Activated CD4-positive, alpha-beta T cell treated with anti-CD3 and anti-CD28 coated beads for 36 hours (primary cell): ENCODE measurements at regions of chr2 and their contacts with region 1.

Region 1: DNA sequence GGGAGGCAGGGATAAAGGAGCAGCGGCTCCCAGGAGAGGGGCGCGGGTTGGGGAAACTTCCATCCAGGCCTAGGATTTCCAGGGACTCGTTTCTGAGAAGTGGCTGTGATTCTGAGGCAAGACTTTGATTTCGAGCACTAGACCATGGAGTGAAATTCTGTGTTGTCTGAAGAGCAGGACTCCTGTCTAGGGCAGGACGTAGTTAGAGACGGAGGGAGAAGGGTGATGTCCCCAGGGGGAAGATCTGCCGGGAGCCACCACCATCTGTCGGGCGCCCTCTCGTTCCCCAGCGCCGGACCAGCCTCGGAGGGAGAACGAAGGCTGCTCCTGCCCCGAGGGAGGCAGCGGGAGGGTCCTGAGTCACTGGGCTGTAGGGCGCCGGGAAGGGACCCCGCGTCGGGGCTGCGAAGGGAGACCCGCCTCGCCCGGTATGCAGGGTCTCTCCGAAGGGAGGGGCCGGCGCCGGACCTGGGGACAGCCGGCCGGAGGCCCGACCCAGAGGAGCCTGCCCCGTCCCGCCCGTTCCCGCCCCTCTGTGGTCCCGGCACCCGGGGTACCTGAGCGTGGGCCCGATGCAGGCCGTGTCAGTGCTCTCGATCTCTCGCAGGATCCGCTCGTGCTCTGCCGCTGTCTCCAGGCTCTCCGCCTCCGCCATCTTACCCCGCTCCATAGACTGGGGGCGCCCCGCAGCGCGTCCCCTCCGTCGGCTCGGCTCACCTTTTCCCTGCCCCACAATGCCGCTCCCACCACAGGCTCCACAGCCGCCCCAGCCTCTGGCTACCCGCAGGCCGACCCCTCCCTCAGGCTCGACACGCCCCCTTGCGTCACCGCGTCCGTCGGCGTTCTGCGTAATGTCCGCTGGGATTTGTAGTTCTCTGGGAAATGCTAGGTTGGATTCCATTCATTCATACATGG is at the start of gene EXOC6B:
- DNase-seq: peak; percentile 91
- ATAC-seq: peak; percentile 80
- H3K4me3 Mint-ChIP-seq: peak within 1 kb of the TSS; percentile 93
- H3K27ac Mint-ChIP-seq: peak within 1 kb of the TSS; percentile 75
- H3K4me1 Mint-ChIP-seq: peaks cover 40% of the 10 kb centered on the region
- H3K27me3 Mint-ChIP-seq: peaks cover 2% of the 10 kb centered on the region
- total RNA-seq, gene EXOC6B: 7.0 to 9.0 TPM

Region 2: GRCh38 chr2:72694715-72695496 is 130.6 kb before region 1 on chr2:
- CTCF ChIA-PET with region 1: no interaction called
- POLR2A ChIA-PET with region 1: no interaction called
- intact Hi-C with region 1: no loop called
- DNase-seq: no peak
- ATAC-seq: no peak
- H3K4me3 Mint-ChIP-seq: no peak overlapping the region
- H3K27ac Mint-ChIP-seq: no peak overlapping the region
- H3K4me1 Mint-ChIP-seq: no peaks in the 10 kb centered on the region
- H3K27me3 Mint-ChIP-seq: no peaks in the 10 kb centered on the region

Region 3: GRCh38 chr2:72778410-72778809 is 47.1 kb before region 1 on chr2:
- CTCF ChIA-PET with region 1: no interaction called
- POLR2A ChIA-PET with region 1: no interaction called
- intact Hi-C with region 1: loop called in 1 of 2 experiments (anchors 2 kb)
- DNase-seq: no peak
- ATAC-seq: peak; percentile 70
- H3K4me3 Mint-ChIP-seq: no peak overlapping the region
- H3K27ac Mint-ChIP-seq: no peak overlapping the region
- H3K4me1 Mint-ChIP-seq: peaks cover 3% of the 10 kb centered on the region
- H3K27me3 Mint-ChIP-seq: no peaks in the 10 kb centered on the region